ENCODE measurements at regions of chr15 and their contacts with region 1.

Region 1: GRCh38 chr15:97995881-97996603 is 35.5 kb downstream of the ARRDC4 start:
- DNase-seq: peak; percentile 65
- H3K4me3 Mint-ChIP-seq: peak overlapping the region; percentile 21
- H3K27ac Mint-ChIP-seq: peak overlapping the region; percentile 60
- H3K4me1 Mint-ChIP-seq: peaks cover 20% of the 10 kb centered on the region
- H3K27me3 Mint-ChIP-seq: no peaks in the 10 kb centered on the region
- CTCF ChIP-seq: peak; percentile 69

Region 2: DNA sequence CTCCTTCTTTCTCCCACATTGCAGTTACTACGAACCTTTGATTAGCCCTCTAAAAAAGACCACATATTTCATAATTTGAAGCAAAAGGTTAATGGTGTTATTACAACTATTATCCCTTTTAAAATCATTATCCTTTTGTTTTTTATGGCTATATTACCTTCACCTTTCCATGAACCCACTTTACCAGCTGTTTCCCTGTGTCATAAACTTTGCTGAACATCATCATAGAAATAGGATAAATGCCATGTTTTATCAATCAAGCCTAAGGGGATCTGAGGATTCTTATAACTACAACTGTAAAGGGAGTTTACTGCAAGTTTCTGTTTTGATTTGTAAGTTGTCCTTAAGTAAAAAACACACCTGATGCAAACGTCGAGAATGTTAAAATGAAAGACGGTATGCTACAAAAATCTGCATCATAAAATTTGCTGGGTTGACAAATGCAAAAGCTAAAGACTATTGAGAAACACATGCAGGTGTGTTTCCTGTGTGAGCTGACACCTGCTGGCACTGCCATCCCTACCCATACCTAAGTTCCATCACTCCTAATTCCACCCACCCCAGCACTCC is 74.7 kb before region 1 on chr15:
- CTCF ChIA-PET with region 1: no interaction called
- intact Hi-C with region 1: no loop called
- DNase-seq: no peak
- H3K4me3 Mint-ChIP-seq: no peak overlapping the region
- H3K27ac Mint-ChIP-seq: no peak overlapping the region
- H3K4me1 Mint-ChIP-seq: no peaks in the 10 kb centered on the region
- H3K27me3 Mint-ChIP-seq: no peaks in the 10 kb centered on the region
- CTCF ChIP-seq: no peak

Region 3: GRCh38 chr15:97960364-97961066 is 35.5 kb before region 1 on chr15 and contains the start of gene ARRDC4:
- CTCF ChIA-PET with region 1: interaction called, 6 read pairs
- intact Hi-C with region 1: loop called (anchors 2 kb)
- DNase-seq: peak; percentile 99
- H3K4me3 Mint-ChIP-seq: peak within 1 kb of the TSS; percentile 93
- H3K27ac Mint-ChIP-seq: peak within 1 kb of the TSS; percentile 98
- H3K4me1 Mint-ChIP-seq: peaks cover 32% of the 10 kb centered on the region
- H3K27me3 Mint-ChIP-seq: no peaks in the 10 kb centered on the region
- CTCF ChIP-seq: no peak
- total RNA-seq, gene ARRDC4: 3.0 and 3.2 TPM in 2 replicates

Region 4: DNA sequence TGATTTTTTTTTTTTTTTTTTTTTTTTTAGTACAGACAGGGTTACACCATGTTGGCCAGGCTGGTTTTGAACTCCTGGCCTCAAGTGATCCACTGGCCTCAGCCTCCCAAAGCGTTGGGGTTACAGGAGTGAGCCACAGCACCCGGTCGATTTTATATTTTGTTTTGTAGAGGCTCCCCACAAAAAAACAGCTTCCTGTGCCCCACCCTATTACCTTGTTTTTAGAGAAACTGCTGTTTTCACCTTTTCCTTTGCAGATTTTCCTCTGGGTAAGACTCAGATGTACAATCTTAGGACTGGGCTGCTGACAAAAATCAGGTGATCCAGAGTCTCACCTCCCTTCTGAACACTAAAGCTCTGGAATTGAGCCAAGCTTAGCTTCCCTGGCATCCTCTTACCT is 15.0 kb before region 1 on chr15:
- CTCF ChIA-PET with region 1: interaction called, 15 read pairs
- intact Hi-C with region 1: no loop called
- DNase-seq: no peak
- H3K4me3 Mint-ChIP-seq: no peak overlapping the region
- H3K27ac Mint-ChIP-seq: no peak overlapping the region
- H3K4me1 Mint-ChIP-seq: peaks cover 16% of the 10 kb centered on the region
- H3K27me3 Mint-ChIP-seq: no peaks in the 10 kb centered on the region
- CTCF ChIP-seq: no peak